Aorta (tissue), 5 donors: ENCODE measurements at regions of chr11 and their contacts with region 1.

Region 1: GRCh38 chr11:86193297-86194095 is 51.1 kb upstream of the EED start:
- DNase-seq: peak; percentile 80 to 82
- ATAC-seq: peak; percentile 94
- H3K4me3 ChIP-seq: no peak overlapping the region
- H3K27ac ChIP-seq: no peak overlapping the region
- H3K4me1 ChIP-seq: no peaks in the 10 kb centered on the region
- H3K27me3 ChIP-seq: no peaks in the 10 kb centered on the region

Region 2: DNA sequence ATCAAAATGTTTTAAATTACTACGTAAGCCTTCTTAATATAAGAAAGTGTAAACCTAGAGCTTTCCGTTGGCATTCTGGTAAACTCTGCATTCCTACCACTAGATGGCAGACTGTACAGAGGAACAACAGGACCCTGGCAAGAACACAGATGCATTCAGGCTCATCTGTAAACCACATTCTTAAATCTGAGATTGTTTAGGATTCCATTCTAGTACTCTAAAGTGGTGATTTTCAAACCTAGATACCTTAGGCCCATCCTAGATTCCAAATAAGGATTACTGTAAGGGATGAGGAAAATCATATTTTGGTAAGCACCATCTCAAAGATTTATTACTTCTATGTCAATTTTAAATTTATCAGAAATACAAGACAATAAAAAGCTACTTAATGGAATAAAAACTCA is 151.5 kb before region 1 on chr11:
- intact Hi-C with region 1: loop called (anchors 5 kb)
- DNase-seq: no peak
- ATAC-seq: peak; percentile 93
- H3K4me3 ChIP-seq: peak overlapping the region in 1 of 2 donors; percentile 34
- H3K27ac ChIP-seq: no peak overlapping the region
- H3K4me1 ChIP-seq: peaks cover 1 to 6% of the 10 kb centered on the region in 2 donors
- H3K27me3 ChIP-seq: no peaks in the 10 kb centered on the region

Region 3: GRCh38 chr11:86068951-86069407 is 124.5 kb before region 1 on chr11 and contains the start of gene PICALM:
- intact Hi-C with region 1: loop called in 1 of 2 experiments (anchors 2 kb)
- DNase-seq: peak; percentile 99
- ATAC-seq: peak; percentile 98
- H3K4me3 ChIP-seq: peak within 1 kb of the TSS; percentile 93 to 100
- H3K27ac ChIP-seq: peak within 1 kb of the TSS; percentile 97 to 99
- H3K4me1 ChIP-seq: no peaks in the 10 kb centered on the region
- H3K27me3 ChIP-seq: no peaks in the 10 kb centered on the region
- total RNA-seq, gene PICALM: 306 to 486 TPM

Region 4: DNA sequence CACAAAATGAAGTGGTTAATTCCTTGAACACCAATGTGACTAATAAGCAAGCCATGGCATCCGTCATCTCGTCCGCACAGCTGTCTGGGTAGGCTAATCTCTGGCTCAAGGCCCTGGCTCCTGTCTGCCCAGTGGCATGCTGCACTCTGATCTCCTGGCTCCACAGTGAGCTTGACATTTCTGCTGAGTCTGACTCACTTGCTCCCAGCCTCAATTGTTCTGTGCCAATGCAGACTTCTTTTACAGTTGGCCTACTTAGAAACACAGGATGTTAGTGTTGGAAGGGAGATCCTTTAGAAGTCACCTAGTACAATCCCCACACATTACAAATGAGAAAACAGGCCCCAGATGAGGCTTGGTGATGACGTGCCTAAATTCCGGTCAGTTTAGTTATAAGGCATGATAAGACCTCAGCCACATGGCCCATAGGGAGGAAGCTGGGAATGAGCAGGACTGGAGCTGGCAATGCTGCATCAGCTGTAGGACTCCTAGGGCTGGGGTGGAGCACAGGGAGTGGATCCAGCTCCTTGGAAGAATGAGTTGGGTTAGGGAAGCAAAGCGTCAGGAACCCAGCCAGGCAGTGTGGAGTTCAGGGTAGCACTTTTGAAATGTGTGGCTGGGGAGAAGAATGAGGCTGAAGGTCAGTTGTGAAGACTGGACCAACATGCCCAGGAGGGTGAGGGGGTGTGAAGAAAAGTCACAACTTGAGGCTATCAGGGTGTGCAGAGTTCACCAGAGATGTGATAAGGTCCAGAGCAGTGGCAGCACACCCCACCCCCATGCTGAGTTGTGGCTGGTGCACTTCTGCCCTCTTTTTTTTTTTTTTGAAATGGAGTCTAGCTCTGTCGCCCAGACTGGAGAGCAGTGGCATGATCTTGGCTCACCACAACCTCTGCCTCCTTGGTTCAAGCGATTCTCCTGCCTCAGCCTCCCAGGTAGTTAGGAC is 19.1 kb before region 1 on chr11:
- intact Hi-C with region 1: loop called in 1 of 2 experiments (anchors 1 kb)
- DNase-seq: peak; percentile 92 to 93
- ATAC-seq: peak; percentile 94
- H3K4me3 ChIP-seq: no peak overlapping the region
- H3K27ac ChIP-seq: peak overlapping the region; percentile 29 to 84
- H3K4me1 ChIP-seq: peaks cover 0 to 2% of the 10 kb centered on the region in 2 donors
- H3K27me3 ChIP-seq: no peaks in the 10 kb centered on the region

Region 5: DNA sequence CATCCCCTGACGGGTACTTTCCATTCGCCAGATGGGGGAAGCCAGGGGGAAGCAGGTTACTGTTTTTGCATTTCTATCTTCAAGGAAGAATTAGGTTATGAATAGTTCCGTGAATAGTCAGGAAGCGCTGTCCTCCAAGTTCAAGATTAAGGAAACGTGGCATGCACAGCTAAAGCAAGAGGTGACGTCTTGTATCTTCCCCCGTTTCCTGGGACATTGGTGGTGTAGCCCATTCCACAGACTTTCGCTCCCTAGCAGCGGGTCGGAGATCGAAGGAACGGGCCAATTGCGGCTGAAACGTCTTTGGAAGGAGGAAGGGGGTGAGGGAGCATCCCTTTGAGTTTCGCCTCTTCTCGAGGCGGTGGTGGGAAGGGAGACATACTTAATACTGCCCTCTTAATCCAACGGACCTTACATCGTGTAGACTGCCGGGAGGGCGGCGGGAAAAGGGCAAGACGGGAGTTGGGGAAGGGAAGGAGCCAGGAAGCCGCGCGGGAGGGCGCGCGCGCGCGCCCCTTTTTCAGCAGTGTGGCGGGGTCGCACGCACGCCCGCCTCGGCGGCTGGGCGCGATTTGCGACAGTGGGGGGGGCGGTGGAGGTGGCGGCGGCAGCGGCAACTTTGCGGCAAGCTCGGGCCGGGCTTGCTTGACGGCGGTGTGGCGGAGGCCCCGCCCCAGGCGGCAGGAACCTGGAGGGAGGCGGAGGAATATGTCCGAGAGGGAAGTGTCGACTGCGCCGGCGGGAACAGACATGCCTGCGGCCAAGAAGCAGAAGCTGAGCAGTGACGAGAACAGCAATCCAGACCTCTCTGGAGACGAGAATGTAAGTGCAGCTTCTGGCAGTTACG is 51.2 kb after region 1 on chr11 and contains the start of gene EED:
- intact Hi-C with region 1: no loop called
- DNase-seq: peak; percentile 98
- ATAC-seq: peak; percentile 98
- H3K4me3 ChIP-seq: peak within 1 kb of the TSS; percentile 87 to 90
- H3K27ac ChIP-seq: peak within 1 kb of the TSS; percentile 87
- H3K4me1 ChIP-seq: peaks cover 3 to 5% of the 10 kb centered on the region in 2 donors
- H3K27me3 ChIP-seq: no peaks in the 10 kb centered on the region
- total RNA-seq, gene EED: 22.0 to 26.5 TPM